ENCODE measurements at regions of chr18 and their contacts with region 1.

Region 1: GRCh38 chr18:63253428-63254372 is 65.9 kb downstream of the BCL2 start:
- DNase-seq: no peak
- H3K4me3 Mint-ChIP-seq: no peak overlapping the region
- H3K27ac Mint-ChIP-seq: peak overlapping the region; percentile 62
- H3K4me1 Mint-ChIP-seq: peaks cover 74% of the 10 kb centered on the region
- H3K27me3 Mint-ChIP-seq: no peaks in the 10 kb centered on the region

Region 2: GRCh38 chr18:62814132-62814759 is 439.5 kb before region 1 on chr18:
- CTCF ChIA-PET with region 1: no interaction called
- POLR2A ChIA-PET with region 1: no interaction called
- intact Hi-C with region 1: no loop called
- DNase-seq: no peak
- H3K4me3 Mint-ChIP-seq: no peak overlapping the region
- H3K27ac Mint-ChIP-seq: no peak overlapping the region
- H3K4me1 Mint-ChIP-seq: peaks cover 6% of the 10 kb centered on the region
- H3K27me3 Mint-ChIP-seq: no peaks in the 10 kb centered on the region

Region 3: DNA sequence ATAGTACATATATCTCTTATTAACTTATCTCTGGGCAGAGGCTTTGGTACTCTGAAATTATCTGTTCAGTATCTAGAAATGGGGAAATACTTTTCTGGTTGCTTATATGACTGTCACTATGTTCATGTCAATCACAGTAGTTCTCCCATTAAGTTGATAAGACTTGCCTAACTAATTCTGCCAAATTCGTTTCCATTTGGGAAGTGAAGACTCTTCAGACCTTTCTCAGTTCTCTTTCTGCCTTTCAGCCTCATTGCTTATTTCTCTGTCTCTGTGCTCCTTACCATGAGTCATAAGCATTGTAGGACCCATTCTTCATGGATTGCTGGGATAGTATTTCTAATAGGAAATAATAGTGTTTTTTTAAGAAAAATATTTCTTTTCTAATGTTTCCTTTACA is 424.8 kb before region 1 on chr18:
- CTCF ChIA-PET with region 1: no interaction called
- POLR2A ChIA-PET with region 1: no interaction called
- intact Hi-C with region 1: no loop called
- DNase-seq: no peak
- H3K4me3 Mint-ChIP-seq: no peak overlapping the region
- H3K27ac Mint-ChIP-seq: no peak overlapping the region
- H3K4me1 Mint-ChIP-seq: peaks cover 10% of the 10 kb centered on the region
- H3K27me3 Mint-ChIP-seq: no peaks in the 10 kb centered on the region

Region 4: DNA sequence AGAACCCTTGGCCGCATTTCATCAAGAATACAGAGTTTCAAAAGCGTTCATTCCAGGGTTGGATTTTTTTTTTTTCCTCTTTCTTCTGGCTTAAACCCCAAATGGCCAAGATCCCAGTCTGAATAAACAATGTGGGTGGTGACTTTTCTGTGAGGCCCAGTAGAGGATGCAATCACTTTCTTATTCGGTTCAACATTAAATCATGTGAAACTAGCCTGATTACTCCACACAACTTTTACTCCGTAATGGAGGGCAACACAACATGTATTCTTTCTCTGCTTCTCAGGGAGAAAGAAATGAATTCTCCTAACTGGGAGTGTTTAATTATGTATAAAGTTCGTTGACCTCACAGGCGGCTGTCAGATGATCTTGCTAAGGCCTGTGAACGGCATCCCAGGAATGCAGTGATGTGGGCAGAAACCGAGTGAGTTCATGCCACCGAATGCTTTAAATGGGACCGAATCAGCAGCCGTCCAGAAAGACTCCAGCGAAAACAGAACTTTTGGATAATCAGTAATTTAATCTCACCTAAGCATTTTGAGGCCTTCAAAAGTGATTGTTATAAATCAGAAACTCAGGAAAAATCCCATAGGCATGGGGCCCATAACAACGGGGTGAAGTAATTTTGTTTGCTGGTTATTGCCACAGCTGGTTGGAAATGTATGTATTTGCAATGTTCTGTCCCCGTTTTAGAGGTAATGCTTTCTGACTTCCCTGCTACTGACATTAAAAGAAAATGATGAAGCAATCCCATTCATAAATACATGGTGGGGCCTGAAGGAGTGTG is 15.6 kb before region 1 on chr18:
- CTCF ChIA-PET with region 1: interaction called, 4 read pairs
- POLR2A ChIA-PET with region 1: no interaction called
- intact Hi-C with region 1: loop called (anchors 2 kb)
- DNase-seq: no peak
- H3K4me3 Mint-ChIP-seq: no peak overlapping the region
- H3K27ac Mint-ChIP-seq: no peak overlapping the region
- H3K4me1 Mint-ChIP-seq: peaks cover 62% of the 10 kb centered on the region
- H3K27me3 Mint-ChIP-seq: no peaks in the 10 kb centered on the region

Region 5: DNA sequence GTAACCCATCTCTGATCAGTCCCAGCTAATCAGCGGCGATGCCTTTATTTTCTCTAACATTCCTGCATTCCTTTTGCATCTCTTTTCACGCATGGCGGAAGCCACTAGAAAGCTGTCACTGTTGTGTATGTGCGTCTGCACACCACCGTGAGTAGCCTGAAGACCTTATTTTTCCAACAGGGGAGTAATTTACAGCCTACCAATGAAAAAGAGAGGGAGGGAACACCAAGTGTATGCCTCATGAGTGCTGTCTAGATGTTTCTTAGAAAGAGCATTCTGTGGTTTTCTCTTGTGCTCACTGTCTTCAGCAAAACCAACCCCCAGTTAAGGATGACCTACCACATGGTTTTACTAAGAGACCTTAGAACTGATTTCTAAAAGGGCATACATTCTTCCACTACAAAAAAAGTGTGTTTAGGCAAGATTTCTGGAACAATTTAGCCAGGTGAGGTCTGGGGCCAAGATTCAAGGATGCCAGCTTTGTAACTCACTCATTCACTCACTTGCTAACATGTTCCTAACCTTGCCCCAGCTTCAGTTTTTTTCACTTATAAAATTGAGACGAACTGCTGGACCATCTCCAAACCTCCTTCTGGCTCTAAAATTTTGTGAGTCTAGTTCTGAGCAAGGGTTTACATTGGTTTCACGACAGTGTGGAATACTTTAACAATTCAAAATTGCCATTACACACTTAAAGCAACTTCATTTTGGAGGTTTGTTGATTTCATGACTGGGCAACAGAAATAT is 14.4 kb after region 1 on chr18:
- CTCF ChIA-PET with region 1: no interaction called
- POLR2A ChIA-PET with region 1: no interaction called
- intact Hi-C with region 1: loop called (anchors 1 kb)
- DNase-seq: no peak
- H3K4me3 Mint-ChIP-seq: peak overlapping the region; percentile 2
- H3K27ac Mint-ChIP-seq: peak overlapping the region; percentile 70
- H3K4me1 Mint-ChIP-seq: peaks cover 68% of the 10 kb centered on the region
- H3K27me3 Mint-ChIP-seq: no peaks in the 10 kb centered on the region

Region 6: DNA sequence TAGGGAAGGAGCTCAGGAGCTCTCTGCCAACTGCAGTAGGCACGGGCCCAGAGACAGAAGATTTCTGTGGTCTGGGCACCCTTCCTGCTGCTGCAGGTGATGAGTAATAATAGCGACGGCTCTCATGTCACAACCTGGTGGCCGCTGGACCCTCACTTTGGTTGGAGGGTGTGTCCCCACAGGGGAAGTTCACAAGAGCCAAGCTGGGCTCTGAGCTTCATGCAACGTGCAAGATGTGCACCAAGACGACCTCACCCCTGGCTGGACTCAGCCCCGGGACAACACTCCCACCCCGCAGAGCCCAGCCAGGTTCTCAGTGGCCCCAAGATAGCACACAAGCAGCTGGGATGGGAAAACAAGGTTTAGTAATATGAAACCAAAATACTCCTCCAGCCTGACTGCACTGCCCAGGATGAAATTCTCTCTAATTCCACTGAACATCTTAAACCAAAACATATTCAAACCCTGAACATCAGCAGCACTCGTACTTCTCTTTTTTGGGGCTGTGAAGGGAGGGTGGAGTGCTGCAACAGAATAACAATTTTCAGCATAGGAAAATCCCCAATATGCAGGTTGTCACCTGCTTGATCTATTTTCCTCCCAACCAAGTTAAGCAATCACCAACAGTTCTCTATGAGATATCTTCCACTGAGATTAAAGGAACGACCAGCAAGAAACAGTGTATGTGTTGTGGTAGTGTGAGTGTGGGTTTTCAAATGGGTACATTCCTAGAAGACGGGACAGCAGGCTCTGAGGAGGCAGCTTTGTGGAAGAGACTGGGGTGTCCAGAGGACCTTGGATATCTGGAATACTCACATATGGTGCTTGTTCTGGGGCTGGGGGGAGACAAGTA is 39.4 kb after region 1 on chr18:
- CTCF ChIA-PET with region 1: no interaction called
- POLR2A ChIA-PET with region 1: interaction called, 5 read pairs
- intact Hi-C with region 1: loop called (anchors 2 kb)
- DNase-seq: peak; percentile 58
- H3K4me3 Mint-ChIP-seq: peak overlapping the region; percentile 0
- H3K27ac Mint-ChIP-seq: peak overlapping the region; percentile 19
- H3K4me1 Mint-ChIP-seq: peaks cover 62% of the 10 kb centered on the region
- H3K27me3 Mint-ChIP-seq: no peaks in the 10 kb centered on the region

Region 7: DNA sequence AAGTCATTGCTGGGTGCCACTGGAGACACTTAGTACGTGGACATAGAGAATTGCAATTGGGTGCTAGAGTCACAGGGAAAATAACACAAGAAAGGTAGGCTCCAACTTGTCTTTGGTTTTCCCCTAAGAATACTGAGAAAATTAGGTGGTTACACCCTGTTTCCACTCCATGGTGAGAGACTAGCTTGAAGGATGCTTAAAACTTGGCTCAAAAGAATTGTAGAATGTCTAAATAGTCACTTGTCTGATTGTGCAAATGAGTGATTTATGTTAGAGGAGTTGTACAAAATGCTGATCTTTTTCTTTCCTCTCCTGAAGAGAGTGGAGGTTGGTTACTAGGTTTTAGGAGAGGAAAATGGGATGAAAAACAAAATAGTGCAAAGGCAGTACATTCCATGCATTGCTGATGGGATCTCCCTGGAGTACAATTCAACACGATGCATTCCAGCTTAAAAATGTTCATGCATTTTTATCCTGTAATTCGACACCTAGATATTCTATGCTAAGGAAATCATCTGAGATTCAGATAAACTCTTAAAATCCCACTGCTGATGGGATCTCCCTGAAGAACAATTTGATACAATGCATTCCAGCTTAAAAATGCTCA is 286.3 kb after region 1 on chr18:
- CTCF ChIA-PET with region 1: no interaction called
- POLR2A ChIA-PET with region 1: no interaction called
- intact Hi-C with region 1: no loop called
- DNase-seq: no peak
- H3K4me3 Mint-ChIP-seq: no peak overlapping the region
- H3K27ac Mint-ChIP-seq: no peak overlapping the region
- H3K4me1 Mint-ChIP-seq: no peaks in the 10 kb centered on the region
- H3K27me3 Mint-ChIP-seq: peaks cover 18% of the 10 kb centered on the region

Measured in activated CD4-positive, alpha-beta memory T cell treated with anti-CD3 and anti-CD28 coated beads for 36 hours (primary cell).